ENCODE measurements at regions of chr16 and their contacts with region 1.

Region 1: GRCh38 chr16:84647828-84648594 is at the start of gene KLHL36:
- DNase-seq: peak; percentile 68 to 76 (median 72)
- H3K4me3 ChIP-seq: peak within 1 kb of the TSS; percentile 32 to 75
- H3K4me3 Mint-ChIP-seq: peak within 1 kb of the TSS; percentile 86 to 96 (median 94)
- H3K27ac ChIP-seq: peak within 1 kb of the TSS; percentile 62
- H3K27ac Mint-ChIP-seq: peak within 1 kb of the TSS; percentile 86 to 97 (median 96)
- H3K4me1 ChIP-seq: peaks cover 47% of the 10 kb centered on the region
- H3K4me1 Mint-ChIP-seq: peaks cover 30 to 53% (median 41%) of the 10 kb centered on the region in 4 donors
- H3K27me3 ChIP-seq: no peaks in the 10 kb centered on the region
- H3K27me3 Mint-ChIP-seq: no peaks in the 10 kb centered on the region
- total RNA-seq, gene KLHL36: 131 to 149 TPM

Region 2: DNA sequence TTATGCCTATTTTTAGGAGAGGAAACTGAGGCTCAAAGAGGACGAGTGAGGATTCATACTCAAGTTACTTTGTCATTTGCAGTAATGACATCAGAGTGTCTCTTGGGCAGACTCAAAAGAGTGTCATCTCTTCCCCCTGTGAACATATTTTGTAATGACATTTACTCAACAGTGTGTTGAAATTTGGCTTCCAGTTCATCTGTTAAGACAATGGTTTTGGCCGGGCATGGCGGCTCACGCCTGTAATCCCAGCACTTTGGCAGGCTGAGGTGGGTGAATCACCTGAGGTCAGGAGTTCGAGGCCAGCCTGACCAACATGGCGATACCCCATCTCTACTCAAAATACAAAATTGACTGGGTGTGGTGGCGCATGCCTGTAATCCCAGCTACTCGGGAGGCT is 324.4 kb before region 1 on chr16:
- CTCF ChIA-PET with region 1: no interaction called
- POLR2A ChIA-PET with region 1: no interaction called
- intact Hi-C with region 1: no loop called
- DNase-seq: no peak
- H3K4me3 ChIP-seq: no peak overlapping the region
- H3K4me3 Mint-ChIP-seq: no peak overlapping the region
- H3K27ac ChIP-seq: no peak overlapping the region
- H3K27ac Mint-ChIP-seq: no peak overlapping the region
- H3K4me1 ChIP-seq: no peaks in the 10 kb centered on the region
- H3K4me1 Mint-ChIP-seq: no peaks in the 10 kb centered on the region
- H3K27me3 ChIP-seq: no peaks in the 10 kb centered on the region
- H3K27me3 Mint-ChIP-seq: peaks cover 4 to 7% of the 10 kb centered on the region in 2 donors

Region 3: GRCh38 chr16:84569382-84569987 is 78.5 kb before region 1 on chr16:
- CTCF ChIA-PET with region 1: no interaction called
- POLR2A ChIA-PET with region 1: no interaction called
- intact Hi-C with region 1: no loop called
- DNase-seq: no peak
- H3K4me3 ChIP-seq: no peak overlapping the region
- H3K4me3 Mint-ChIP-seq: no peak overlapping the region
- H3K27ac ChIP-seq: no peak overlapping the region
- H3K27ac Mint-ChIP-seq: peak overlapping the region in 6 of 7 donors; percentile 40 to 82 (median 64)
- H3K4me1 ChIP-seq: peaks cover 10% of the 10 kb centered on the region
- H3K4me1 Mint-ChIP-seq: peaks cover 8 to 40% (median 29%) of the 10 kb centered on the region in 4 donors
- H3K27me3 ChIP-seq: no peaks in the 10 kb centered on the region
- H3K27me3 Mint-ChIP-seq: no peaks in the 10 kb centered on the region

Region 4: DNA sequence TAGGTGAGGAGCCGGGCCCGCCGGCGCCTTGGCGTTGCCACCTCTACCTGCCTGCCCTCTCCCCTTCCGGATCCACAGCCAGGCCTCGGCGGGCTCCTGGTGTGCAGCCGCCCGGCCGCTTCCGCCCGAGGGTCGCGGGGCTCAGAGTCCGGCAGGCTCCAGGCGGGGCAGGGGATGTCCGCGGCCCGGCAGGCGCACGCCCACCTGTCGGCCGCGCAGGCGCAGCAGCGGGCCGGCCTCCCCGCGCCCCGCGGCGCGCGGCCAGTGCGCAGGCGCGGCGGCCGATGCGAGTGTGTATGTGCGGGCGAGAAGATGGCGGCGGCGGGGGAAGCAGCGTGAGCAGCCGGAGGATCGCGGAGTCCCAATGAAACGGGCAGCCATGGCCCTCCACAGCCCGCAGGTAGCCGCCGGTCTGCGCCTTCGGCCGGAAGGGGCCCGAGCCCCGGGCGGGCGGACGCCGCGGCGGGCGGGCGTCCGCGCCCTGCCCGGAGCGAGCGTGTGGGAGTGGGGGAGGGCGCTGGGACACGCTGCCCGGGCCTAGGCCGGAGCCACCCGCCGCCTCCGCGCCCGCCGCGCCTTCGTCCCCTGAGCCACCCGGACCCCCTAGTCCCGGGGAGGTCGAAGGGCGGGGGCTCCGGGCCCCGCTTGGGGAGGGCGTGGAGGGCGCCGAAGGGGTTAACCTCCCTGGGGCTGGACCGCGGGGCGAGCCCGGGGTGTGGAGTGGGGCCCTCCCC is 51.9 kb after region 1 on chr16 and contains the start of gene USP10:
- CTCF ChIA-PET with region 1: interaction called, 6 read pairs
- POLR2A ChIA-PET with region 1: interaction called, 8 read pairs
- intact Hi-C with region 1: loop called (anchors 2 kb)
- DNase-seq: peak; percentile 83 to 91 (median 88)
- H3K4me3 ChIP-seq: peak within 1 kb of the TSS; percentile 78 to 86
- H3K4me3 Mint-ChIP-seq: peak within 1 kb of the TSS; percentile 95 to 100 (median 98)
- H3K27ac ChIP-seq: peak within 1 kb of the TSS; percentile 92
- H3K27ac Mint-ChIP-seq: peak within 1 kb of the TSS; percentile 93 to 99 (median 98)
- H3K4me1 ChIP-seq: peaks cover 47% of the 10 kb centered on the region
- H3K4me1 Mint-ChIP-seq: peaks cover 23 to 46% (median 35%) of the 10 kb centered on the region in 4 donors
- H3K27me3 ChIP-seq: no peaks in the 10 kb centered on the region
- H3K27me3 Mint-ChIP-seq: no peaks in the 10 kb centered on the region
- total RNA-seq, gene USP10: 89.0 to 93.2 TPM

Region 5: GRCh38 chr16:85402910-85403692 is 755.1 kb after region 1 on chr16:
- CTCF ChIA-PET with region 1: no interaction called
- POLR2A ChIA-PET with region 1: no interaction called
- intact Hi-C with region 1: no loop called
- DNase-seq: no peak
- H3K4me3 ChIP-seq: no peak overlapping the region
- H3K4me3 Mint-ChIP-seq: no peak overlapping the region
- H3K27ac ChIP-seq: no peak overlapping the region
- H3K27ac Mint-ChIP-seq: no peak overlapping the region
- H3K4me1 ChIP-seq: no peaks in the 10 kb centered on the region
- H3K4me1 Mint-ChIP-seq: no peaks in the 10 kb centered on the region
- H3K27me3 ChIP-seq: no peaks in the 10 kb centered on the region
- H3K27me3 Mint-ChIP-seq: no peaks in the 10 kb centered on the region